WTC11 (cell line): ENCODE measurements at regions of chr6 and their contacts with region 1.

Region 1: DNA sequence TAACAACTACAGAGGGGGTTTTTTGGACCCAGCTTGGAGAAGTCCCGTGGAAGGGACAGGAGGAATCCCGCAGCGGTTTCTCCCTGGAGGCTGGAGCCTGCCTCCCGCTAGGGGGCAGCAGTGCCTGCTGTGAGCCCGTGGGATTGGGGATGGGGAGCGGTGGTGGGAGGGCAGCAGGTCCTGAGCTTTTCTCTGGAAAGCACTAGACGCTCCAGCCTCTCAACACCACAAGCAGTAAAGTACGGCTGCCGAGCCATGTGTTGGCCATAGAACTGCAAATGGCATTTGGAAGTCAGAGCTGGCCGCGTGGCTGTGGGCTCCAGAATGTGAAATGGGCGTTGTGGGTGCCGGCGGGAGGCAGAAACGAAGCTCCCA is 47.7 kb downstream of the GMPR start:
- DNase-seq: peak; percentile 83
- ATAC-seq: peak; percentile 88
- H3K4me3 Mint-ChIP-seq: peak overlapping the region; percentile 14; the same call in 1 of the 2 replicates
- H3K27ac Mint-ChIP-seq: no peak overlapping the region
- H3K4me1 Mint-ChIP-seq: peaks cover 10% of the 10 kb centered on the region
- H3K27me3 Mint-ChIP-seq: no peaks in the 10 kb centered on the region
- CTCF ChIP-seq: peak; percentile 78

Region 2: DNA sequence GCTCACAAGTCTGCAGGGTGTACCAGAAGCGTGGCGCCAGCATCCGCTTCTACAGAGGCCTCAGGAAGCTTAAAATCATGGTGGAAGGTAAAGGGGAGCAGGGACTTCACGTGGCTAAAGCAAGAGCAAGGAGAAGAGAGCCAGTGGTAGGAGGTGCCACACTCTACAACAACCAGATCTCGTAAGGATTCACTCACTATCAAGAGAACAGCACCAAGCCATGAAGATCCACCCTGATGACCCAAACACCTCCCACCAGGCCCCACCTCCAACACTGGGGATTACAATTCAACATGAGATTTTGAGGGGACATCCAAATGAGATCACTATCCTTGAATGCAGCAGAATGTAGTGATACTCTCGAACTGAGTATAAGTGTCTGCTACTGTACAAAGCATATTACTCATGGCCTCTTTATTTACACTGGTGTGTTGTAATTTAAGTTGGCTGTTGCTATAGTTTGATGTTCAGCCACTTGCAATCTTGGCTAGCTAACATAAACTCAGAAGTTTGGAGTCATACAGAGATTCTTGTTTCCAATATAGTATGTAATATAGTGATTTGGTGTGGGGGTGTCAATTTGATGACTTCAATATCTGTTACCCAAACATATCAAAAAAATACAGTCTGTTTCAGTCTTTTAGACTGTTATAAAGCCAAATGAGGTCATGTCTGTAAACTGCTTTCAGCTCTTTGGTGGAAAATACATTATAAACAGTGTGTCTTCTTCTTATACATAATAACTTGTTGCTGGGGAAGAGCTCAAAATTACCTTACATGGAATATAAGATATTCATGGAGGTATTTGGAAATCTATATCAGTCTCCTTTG is 196.7 kb before region 1 on chr6:
- CTCF ChIA-PET with region 1: no interaction called
- POLR2A ChIA-PET with region 1: no interaction called
- DNase-seq: no peak
- ATAC-seq: no peak
- H3K4me3 Mint-ChIP-seq: no peak overlapping the region
- H3K27ac Mint-ChIP-seq: no peak overlapping the region
- H3K4me1 Mint-ChIP-seq: no peaks in the 10 kb centered on the region
- H3K27me3 Mint-ChIP-seq: no peaks in the 10 kb centered on the region; the same call in 1 of the 2 replicates
- CTCF ChIP-seq: no peak

Region 3: DNA sequence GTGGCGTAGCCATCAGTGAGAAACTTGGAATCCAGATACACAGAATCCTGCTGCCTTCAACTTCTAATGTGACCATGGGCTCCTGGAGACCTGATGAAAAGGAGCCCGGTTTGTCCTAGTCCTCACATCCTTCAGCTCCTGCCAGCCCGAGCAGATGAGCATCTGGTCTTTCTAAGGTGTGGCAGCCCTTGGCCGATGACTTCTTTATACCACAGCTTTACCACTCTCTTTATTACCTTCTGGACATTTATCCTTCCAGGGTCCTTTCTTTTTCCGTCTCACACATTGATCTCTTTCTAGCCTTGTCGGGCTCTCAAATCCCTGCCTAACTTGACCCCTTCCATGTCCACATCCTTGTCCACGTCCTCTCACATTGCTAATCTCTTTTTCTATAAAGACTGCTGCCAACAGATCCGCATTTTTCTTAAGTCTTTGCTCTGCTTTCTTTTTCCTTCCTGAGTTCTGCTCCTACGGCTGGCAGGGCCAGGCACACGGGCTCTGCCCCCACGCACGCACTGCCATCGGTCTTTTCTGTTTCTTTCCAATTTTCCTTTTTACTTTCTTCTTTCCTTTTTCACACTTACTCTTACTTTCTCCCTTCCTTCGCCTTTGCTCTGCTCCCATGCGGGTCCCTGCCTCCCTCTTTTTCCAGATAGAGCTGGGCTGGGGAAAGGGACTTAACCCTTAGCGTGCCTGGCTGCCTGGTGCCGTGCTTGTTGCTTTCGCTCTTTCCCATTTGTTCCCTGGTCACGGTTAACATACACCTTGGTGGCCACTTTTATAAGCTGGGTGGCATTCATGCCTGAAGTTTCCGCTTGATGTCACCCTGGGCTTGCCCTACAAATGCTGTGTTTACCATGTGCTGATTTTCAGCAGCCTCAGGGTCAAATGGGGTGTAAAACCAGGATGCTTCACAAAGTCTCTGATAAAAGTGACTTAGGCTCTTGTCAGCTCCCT is 57.1 kb before region 1 on chr6:
- CTCF ChIA-PET with region 1: interaction called, 12 read pairs
- POLR2A ChIA-PET with region 1: no interaction called
- DNase-seq: no peak
- ATAC-seq: peak; percentile 48; the same call in 1 of the 2 replicates
- H3K4me3 Mint-ChIP-seq: no peak overlapping the region
- H3K27ac Mint-ChIP-seq: no peak overlapping the region
- H3K4me1 Mint-ChIP-seq: peaks cover 2% of the 10 kb centered on the region; the same call in 1 of the 2 replicates
- H3K27me3 Mint-ChIP-seq: no peaks in the 10 kb centered on the region
- CTCF ChIP-seq: no peak

Region 4: DNA sequence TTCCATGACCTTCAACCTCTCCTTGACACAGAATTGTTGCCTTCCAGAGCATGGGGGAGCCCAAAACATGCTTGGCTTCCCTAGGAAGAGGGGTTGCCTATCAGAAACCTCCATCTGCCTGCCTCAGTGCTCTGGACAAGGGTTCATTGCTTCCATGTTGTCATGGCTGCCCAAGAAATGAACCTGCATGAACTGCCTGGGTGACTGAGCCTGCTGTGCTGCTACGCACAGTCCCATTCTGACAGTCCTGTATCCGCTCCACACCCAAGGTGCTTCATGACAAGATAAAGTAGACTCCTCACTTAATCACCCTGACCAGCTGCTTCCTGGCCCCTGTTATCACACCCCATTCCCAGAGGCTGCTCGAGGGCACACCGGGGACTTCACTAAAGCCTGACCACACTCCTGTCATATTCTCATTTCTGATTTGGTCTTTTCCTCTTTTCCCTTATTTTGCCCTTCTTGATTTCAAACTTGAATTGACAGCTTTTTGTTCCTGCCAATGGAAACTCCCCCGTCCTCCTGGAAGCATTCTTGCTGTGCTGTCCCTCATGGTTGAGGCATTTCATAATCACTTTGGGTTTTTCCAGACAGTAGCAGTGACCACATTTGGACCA is 15.8 kb before region 1 on chr6:
- CTCF ChIA-PET with region 1: interaction called, 25 read pairs
- POLR2A ChIA-PET with region 1: no interaction called
- DNase-seq: no peak
- ATAC-seq: no peak
- H3K4me3 Mint-ChIP-seq: no peak overlapping the region
- H3K27ac Mint-ChIP-seq: no peak overlapping the region
- H3K4me1 Mint-ChIP-seq: no peaks in the 10 kb centered on the region
- H3K27me3 Mint-ChIP-seq: no peaks in the 10 kb centered on the region
- CTCF ChIP-seq: no peak

Region 5: DNA sequence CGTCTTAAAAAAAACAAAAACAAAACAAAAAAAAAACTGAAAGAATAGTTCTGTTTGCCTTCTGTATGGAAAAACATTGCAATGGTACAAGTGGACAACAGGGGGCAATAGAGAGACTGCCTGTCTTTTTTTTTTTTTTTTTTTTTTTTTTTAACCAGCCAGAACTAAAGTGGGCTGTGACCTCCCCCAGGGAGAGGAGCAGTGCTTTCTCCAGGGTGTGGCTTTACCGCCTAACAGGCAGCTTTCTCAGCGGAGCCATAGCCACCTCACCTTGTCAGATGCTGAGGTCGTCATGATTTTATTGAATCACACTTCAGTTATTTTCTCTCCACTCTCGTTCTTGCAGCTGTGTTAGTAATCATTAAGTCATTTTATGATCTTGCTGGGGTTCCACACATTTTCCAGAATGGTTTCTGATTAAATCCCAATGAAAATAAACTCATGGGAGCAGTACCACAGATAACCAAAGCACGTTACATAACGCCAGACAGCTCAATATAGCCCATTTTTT is 30.7 kb after region 1 on chr6:
- CTCF ChIA-PET with region 1: interaction called, 20 read pairs
- POLR2A ChIA-PET with region 1: no interaction called
- DNase-seq: peak; percentile 30
- ATAC-seq: peak; percentile 88
- H3K4me3 Mint-ChIP-seq: no peak overlapping the region
- H3K27ac Mint-ChIP-seq: no peak overlapping the region
- H3K4me1 Mint-ChIP-seq: peaks cover 23% of the 10 kb centered on the region
- H3K27me3 Mint-ChIP-seq: no peaks in the 10 kb centered on the region
- CTCF ChIP-seq: peak; percentile 54

Region 6: GRCh38 chr6:16409531-16410441 is 123.7 kb after region 1 on chr6:
- CTCF ChIA-PET with region 1: interaction called, 11 read pairs
- POLR2A ChIA-PET with region 1: no interaction called
- DNase-seq: peak; percentile 68
- ATAC-seq: peak; percentile 89
- H3K4me3 Mint-ChIP-seq: no peak overlapping the region
- H3K27ac Mint-ChIP-seq: no peak overlapping the region
- H3K4me1 Mint-ChIP-seq: no peaks in the 10 kb centered on the region
- H3K27me3 Mint-ChIP-seq: no peaks in the 10 kb centered on the region
- CTCF ChIP-seq: peak; percentile 67

Region 7: GRCh38 chr6:16770701-16771569 is 484.8 kb after region 1 on chr6:
- CTCF ChIA-PET with region 1: interaction called, 10 read pairs
- POLR2A ChIA-PET with region 1: no interaction called
- DNase-seq: peak; percentile 81
- ATAC-seq: peak; percentile 97
- H3K4me3 Mint-ChIP-seq: no peak overlapping the region
- H3K27ac Mint-ChIP-seq: no peak overlapping the region
- H3K4me1 Mint-ChIP-seq: peaks cover 23% of the 10 kb centered on the region
- H3K27me3 Mint-ChIP-seq: peaks cover 3% of the 10 kb centered on the region
- CTCF ChIP-seq: peak; percentile 85